Activated B cell treated with CpG ODN at 0.5 μM for 24 hours (primary cell): ENCODE measurements at regions of chr2 and their contacts with region 1.

Region 1: GRCh38 chr2:127408004-127408806 is 10.0 kb upstream of the PROC start:
- DNase-seq: peak; percentile 79
- ATAC-seq: peak; percentile 91
- H3K4me3 Mint-ChIP-seq: peak overlapping the region; percentile 65
- H3K27ac Mint-ChIP-seq: no peak overlapping the region
- H3K4me1 Mint-ChIP-seq: peaks cover 51% of the 10 kb centered on the region
- H3K27me3 Mint-ChIP-seq: no peaks in the 10 kb centered on the region
- CTCF ChIP-seq: no peak

Region 2: GRCh38 chr2:127422810-127423475 is 14.7 kb after region 1 on chr2:
- CTCF ChIA-PET with region 1: no interaction called
- POLR2A ChIA-PET with region 1: no interaction called
- intact Hi-C with region 1: loop called (anchors 2 kb)
- DNase-seq: peak; percentile 43
- ATAC-seq: peak; percentile 88
- H3K4me3 Mint-ChIP-seq: peak overlapping the region; percentile 80
- H3K27ac Mint-ChIP-seq: no peak overlapping the region
- H3K4me1 Mint-ChIP-seq: peaks cover 16% of the 10 kb centered on the region
- H3K27me3 Mint-ChIP-seq: peaks cover 1% of the 10 kb centered on the region
- CTCF ChIP-seq: no peak

Region 3: GRCh38 chr2:127498386-127498785 is 90.2 kb after region 1 on chr2:
- CTCF ChIA-PET with region 1: no interaction called
- POLR2A ChIA-PET with region 1: no interaction called
- intact Hi-C with region 1: no loop called
- DNase-seq: no peak
- ATAC-seq: no peak
- H3K4me3 Mint-ChIP-seq: no peak overlapping the region
- H3K27ac Mint-ChIP-seq: no peak overlapping the region
- H3K4me1 Mint-ChIP-seq: no peaks in the 10 kb centered on the region
- H3K27me3 Mint-ChIP-seq: no peaks in the 10 kb centered on the region
- CTCF ChIP-seq: no peak